Right ventricle myocardium inferior (tissue), 1 donor: ENCODE measurements at regions of chr2 and their contacts with region 1.

Region 1: DNA sequence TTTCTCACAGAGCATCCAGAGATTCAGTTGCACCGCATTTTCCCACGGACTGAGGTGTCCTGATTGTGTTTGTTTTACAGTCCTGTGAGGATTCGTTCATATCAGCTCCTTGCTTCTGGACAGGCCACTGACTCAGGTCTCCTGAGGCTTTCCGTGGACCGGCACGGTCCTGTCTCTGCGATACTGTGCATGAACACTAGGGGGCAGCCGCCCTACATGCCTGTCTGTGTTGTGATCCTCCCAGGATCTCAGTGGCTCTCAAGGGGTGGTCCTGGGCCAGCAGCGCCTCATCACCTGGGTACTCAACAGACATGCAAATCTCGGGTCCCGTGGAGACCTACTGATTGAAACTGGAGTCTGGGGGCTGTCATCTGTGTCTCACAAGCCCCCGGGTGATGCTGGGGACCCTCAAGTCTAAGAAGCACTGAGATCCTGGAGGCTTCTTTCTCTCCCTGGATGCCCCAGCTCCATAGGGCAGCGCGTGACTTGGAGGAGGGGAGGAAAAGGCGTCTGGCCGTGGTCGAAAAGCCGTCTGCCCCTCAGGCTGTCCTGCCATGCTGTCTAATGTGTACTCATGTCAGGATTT is 28.9 kb downstream of the IL1R2 start:
- DNase-seq: peak; percentile 92
- ATAC-seq: peak; percentile 94

Region 2: DNA sequence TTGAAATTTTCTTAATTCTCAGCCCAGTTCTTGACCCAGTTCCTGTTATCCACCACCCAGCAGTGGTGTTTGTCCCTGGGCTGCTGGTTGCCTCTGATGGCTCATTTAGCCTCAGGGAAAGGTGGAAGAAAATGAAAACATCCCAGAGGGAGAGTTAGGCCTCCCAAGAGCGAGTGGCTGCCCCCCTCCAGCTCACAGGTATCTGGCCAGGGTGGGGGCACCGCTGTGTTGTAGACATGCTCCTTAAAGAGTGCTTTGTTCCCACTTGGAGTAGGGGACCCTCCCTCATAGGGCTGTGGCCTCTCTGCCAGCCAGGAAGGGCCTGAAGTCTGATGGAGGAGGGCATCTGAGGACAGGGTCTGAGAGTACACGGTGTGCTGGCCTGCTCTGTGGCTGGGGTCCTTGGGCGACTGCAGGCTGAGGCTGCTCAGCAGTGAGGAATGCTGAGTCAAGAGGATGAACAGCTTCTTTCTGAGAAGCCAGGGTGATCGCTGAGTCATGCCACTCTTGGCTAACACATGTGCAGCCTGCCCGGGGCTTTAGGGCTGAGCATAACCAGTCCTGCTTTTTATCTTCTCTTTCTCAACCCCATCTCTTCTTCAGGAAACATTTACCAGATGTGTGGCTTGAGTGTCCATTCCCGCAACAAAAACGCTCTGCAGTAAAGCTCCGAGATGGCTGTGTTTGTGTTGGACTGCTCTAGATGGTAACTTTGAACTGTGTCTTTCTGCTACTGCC is 43.4 kb after region 1 on chr2:
- intact Hi-C with region 1: loop called (anchors 5 kb)
- DNase-seq: peak; percentile 91
- ATAC-seq: peak; percentile 87

Region 3: GRCh38 chr2:102166189-102166845 is 145.6 kb after region 1 on chr2:
- intact Hi-C with region 1: loop called (anchors 1 kb)
- DNase-seq: no peak
- ATAC-seq: peak; percentile 76

Region 4: DNA sequence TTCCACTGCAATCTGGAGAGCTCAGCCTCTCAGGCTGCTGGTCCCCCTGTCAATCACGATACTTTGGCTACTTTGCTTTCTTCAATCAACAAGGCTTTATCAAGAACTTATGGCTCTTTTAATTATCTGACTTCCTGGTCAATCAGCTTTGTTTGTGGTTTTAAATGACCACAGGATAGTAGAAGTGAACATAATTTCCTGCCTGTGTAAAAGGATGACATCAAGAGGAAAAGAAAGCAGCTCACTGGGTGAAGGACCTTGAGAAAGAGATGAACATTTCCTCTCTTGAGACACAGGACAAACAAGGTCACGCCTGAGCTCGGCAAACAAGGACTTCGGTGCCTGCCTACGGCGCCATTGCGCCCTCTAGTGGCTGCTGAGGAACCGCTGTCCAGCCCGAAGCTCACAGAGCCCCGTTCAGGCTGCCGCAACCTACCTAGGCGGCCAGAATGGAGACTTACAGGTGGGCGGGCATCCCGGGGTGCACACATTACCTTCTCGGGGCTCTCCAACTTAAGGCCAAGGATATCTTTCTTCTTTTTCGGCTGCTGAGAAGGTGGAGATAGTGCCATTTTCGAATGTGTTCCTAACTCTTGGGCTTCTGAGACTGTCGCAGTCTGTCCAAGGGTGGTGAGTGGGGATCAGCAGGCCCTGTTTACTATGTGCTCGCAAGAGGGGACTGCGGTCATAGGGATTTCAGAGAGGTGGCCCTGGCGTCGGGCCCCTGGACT is 220.1 kb after region 1 on chr2:
- intact Hi-C with region 1: loop called (anchors 1 kb)
- DNase-seq: peak; percentile 94
- ATAC-seq: peak; percentile 92